Mammary epithelial cell (primary cell): ENCODE measurements at regions of chr3 and their contacts with region 1.

Region 1: GRCh38 chr3:50321336-50322114 is 1.0 kb downstream of the HYAL2 start:
- DNase-seq: peak; percentile 85
- H3K4me3 ChIP-seq: peak overlapping the region; percentile 43 to 72 (median 64)
- H3K27ac ChIP-seq: peak overlapping the region; percentile 98
- H3K4me1 ChIP-seq: peaks cover 46% of the 10 kb centered on the region
- H3K27me3 ChIP-seq: no peaks in the 10 kb centered on the region
- CTCF ChIP-seq: peak; percentile 1 to 48

Region 2: DNA sequence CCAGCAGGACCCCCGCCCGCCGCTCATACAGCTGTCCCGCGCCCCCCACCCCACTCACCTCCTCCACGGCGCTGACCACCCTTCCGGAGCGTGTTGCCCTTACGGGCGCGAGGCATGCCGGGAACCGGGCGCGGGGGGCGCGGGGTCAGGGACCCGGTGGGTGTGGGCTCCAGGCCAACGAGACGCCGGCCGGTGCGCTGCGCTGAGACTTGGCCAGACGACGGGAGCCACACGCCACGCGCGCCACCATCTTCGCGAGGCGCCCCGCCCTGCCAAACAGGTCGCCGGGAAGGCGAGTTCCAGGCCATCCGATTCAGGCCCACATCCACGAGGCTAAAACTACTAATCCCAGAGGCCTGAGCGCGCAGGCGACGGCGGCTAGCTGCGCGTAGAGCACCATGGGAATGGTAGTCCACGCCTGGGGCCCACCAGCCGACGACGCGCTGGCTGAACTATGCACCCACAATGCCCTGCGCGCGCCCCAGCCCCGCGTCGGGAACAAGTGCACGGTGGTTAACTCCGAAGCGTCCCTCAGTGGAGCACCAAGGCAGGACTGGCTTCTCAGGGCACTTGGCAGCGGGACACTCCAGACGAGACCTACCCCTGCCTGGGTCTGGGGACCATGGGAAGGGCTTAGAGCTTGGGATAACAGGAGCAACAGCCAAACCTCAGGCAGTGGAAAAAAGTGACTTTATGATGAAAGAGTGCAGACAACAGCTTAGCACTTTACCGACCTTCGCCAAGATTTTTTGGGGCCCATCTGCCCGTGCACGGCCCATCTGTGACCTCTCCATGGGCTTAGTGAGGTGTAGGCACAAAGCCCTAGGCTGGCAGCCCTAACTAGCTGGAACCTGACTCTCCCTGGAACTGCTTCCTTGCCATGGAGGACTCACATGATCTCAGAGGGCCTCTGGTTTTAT is 29.1 kb before region 1 on chr3 and contains the start of gene IFRD2:
- CTCF ChIA-PET with region 1: no interaction called
- dilution Hi-C with region 1: no loop called
- in situ Hi-C with region 1: no loop called
- intact Hi-C with region 1: loop called (anchors 1 kb)
- DNase-seq: peak; percentile 97
- H3K4me3 ChIP-seq: peak within 1 kb of the TSS; percentile 59 to 70 (median 65)
- H3K27ac ChIP-seq: peak within 1 kb of the TSS; percentile 63
- H3K4me1 ChIP-seq: peaks cover 6% of the 10 kb centered on the region
- H3K27me3 ChIP-seq: no peaks in the 10 kb centered on the region
- CTCF ChIP-seq: peak in 1 of 2 donors; percentile 7
- total RNA-seq, gene IFRD2: 65.5 to 117 TPM

Region 3: GRCh38 chr3:50298836-50299637 is 22.5 kb before region 1 on chr3 and contains the starts of genes HYAL3 and NAA80:
- CTCF ChIA-PET with region 1: interaction called, 6 read pairs
- dilution Hi-C with region 1: no loop called
- in situ Hi-C with region 1: no loop called
- intact Hi-C with region 1: loop called (anchors 1 kb)
- DNase-seq: peak; percentile 100
- H3K4me3 ChIP-seq: peak within 1 kb of the TSS; percentile 94 to 99 (median 96)
- H3K27ac ChIP-seq: peak within 1 kb of the TSS; percentile 95
- H3K4me1 ChIP-seq: peaks cover 24% of the 10 kb centered on the region
- H3K27me3 ChIP-seq: no peaks in the 10 kb centered on the region
- CTCF ChIP-seq: peak; percentile 11 to 40
- total RNA-seq, gene HYAL3: 9.7 to 12.7 TPM
- total RNA-seq, gene NAA80: 8.3 to 20.9 TPM

Region 4: GRCh38 chr3:50568947-50569749 is 247.6 kb after region 1 on chr3 and contains the start of gene HEMK1:
- CTCF ChIA-PET with region 1: no interaction called
- dilution Hi-C with region 1: no loop called
- in situ Hi-C with region 1: no loop called
- intact Hi-C with region 1: no loop called
- DNase-seq: peak; percentile 89
- H3K4me3 ChIP-seq: peak within 1 kb of the TSS; percentile 86 to 97 (median 93)
- H3K27ac ChIP-seq: peak within 1 kb of the TSS; percentile 73
- H3K4me1 ChIP-seq: peaks cover 16% of the 10 kb centered on the region
- H3K27me3 ChIP-seq: no peaks in the 10 kb centered on the region
- CTCF ChIP-seq: no peak
- total RNA-seq, gene HEMK1: 14.2 to 23.1 TPM